CD8-positive, alpha-beta T cell (primary cell): ENCODE measurements at regions of chr17 and their contacts with region 1.

Region 1: GRCh38 chr17:6729531-6729930 is 16.4 kb upstream of the SLC13A5 start:
- DNase-seq: no peak
- ATAC-seq: no peak
- H3K4me3 ChIP-seq: no peak overlapping the region
- H3K4me3 Mint-ChIP-seq: no peak overlapping the region
- H3K27ac ChIP-seq: no peak overlapping the region
- H3K27ac Mint-ChIP-seq: no peak overlapping the region
- H3K4me1 ChIP-seq: no peaks in the 10 kb centered on the region
- H3K4me1 Mint-ChIP-seq: no peaks in the 10 kb centered on the region
- H3K27me3 ChIP-seq: no peaks in the 10 kb centered on the region
- H3K27me3 Mint-ChIP-seq: peaks cover 14% of the 10 kb centered on the region
- CTCF ChIP-seq: no peak

Region 2: GRCh38 chr17:6796887-6797490 is 67.5 kb after region 1 on chr17:
- CTCF ChIA-PET with region 1: no interaction called
- POLR2A ChIA-PET with region 1: no interaction called
- intact Hi-C with region 1: loop called in 1 of 2 experiments (anchors 10 kb)
- DNase-seq: no peak
- ATAC-seq: no peak
- H3K4me3 ChIP-seq: no peak overlapping the region
- H3K4me3 Mint-ChIP-seq: no peak overlapping the region
- H3K27ac ChIP-seq: no peak overlapping the region
- H3K27ac Mint-ChIP-seq: no peak overlapping the region
- H3K4me1 ChIP-seq: no peaks in the 10 kb centered on the region
- H3K4me1 Mint-ChIP-seq: no peaks in the 10 kb centered on the region
- H3K27me3 ChIP-seq: no peaks in the 10 kb centered on the region
- H3K27me3 Mint-ChIP-seq: peaks cover 19% of the 10 kb centered on the region
- CTCF ChIP-seq: no peak